CD4-positive, alpha-beta memory T cell (primary cell): ENCODE measurements at regions of chr14 and their contacts with region 1.

Region 1: DNA sequence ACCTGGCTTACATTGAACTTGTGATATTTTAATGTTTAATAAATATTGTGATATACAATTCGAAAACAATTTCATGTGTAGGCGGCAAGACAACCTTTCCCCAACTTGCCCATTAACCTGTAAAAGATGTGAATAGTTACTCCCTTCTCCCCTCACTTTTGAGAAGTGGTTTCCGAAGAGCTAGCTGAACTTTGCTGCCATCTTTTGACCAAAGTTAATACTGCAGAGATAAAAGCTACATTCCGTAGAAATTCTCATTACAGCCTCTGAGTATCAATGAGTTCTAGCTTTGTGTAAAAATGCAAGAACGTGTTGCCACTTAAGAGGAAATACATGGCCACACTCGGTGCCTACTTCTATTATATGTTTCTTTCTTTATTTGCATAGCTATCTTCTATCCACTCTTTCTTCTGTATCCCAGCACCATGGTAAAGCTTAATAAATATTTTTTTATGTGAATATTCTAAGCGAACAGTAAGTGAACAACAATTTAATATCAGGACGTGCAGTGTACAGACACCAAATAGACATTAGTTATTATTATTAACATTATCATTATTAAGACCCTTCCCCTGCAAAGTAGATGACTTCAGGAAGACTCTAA is 105.1 kb upstream of the TMEM260 start:
- DNase-seq: peak in 4 of 5 donors; percentile 30 to 44 (median 38)
- H3K4me3 ChIP-seq: no peak overlapping the region
- H3K4me3 Mint-ChIP-seq: no peak overlapping the region
- H3K27ac ChIP-seq: no peak overlapping the region
- H3K27ac Mint-ChIP-seq: no peak overlapping the region
- H3K4me1 ChIP-seq: no peaks in the 10 kb centered on the region
- H3K4me1 Mint-ChIP-seq: no peaks in the 10 kb centered on the region
- H3K27me3 ChIP-seq: no peaks in the 10 kb centered on the region
- H3K27me3 Mint-ChIP-seq: peaks cover 5 to 7% of the 10 kb centered on the region in 2 donors

Region 2: GRCh38 chr14:55212634-55213033 is 1261.9 kb before region 1 on chr14:
- CTCF ChIA-PET with region 1: no interaction called
- POLR2A ChIA-PET with region 1: no interaction called
- intact Hi-C with region 1: loop called (anchors 1 kb)
- DNase-seq: no peak
- H3K4me3 ChIP-seq: no peak overlapping the region
- H3K4me3 Mint-ChIP-seq: no peak overlapping the region
- H3K27ac ChIP-seq: no peak overlapping the region
- H3K27ac Mint-ChIP-seq: no peak overlapping the region
- H3K4me1 ChIP-seq: no peaks in the 10 kb centered on the region
- H3K4me1 Mint-ChIP-seq: peaks cover 0 to 5% (median 2%) of the 10 kb centered on the region in 4 donors
- H3K27me3 ChIP-seq: no peaks in the 10 kb centered on the region
- H3K27me3 Mint-ChIP-seq: peaks cover 0 to 1% of the 10 kb centered on the region in 2 donors

Region 3: GRCh38 chr14:55707365-55707804 is 767.1 kb before region 1 on chr14:
- CTCF ChIA-PET with region 1: interaction called, 15 read pairs
- POLR2A ChIA-PET with region 1: no interaction called
- intact Hi-C with region 1: loop called (anchors 10 kb)
- DNase-seq: peak in 3 of 5 donors; percentile 22 to 31 (median 26)
- H3K4me3 ChIP-seq: no peak overlapping the region
- H3K4me3 Mint-ChIP-seq: no peak overlapping the region
- H3K27ac ChIP-seq: no peak overlapping the region
- H3K27ac Mint-ChIP-seq: no peak overlapping the region
- H3K4me1 ChIP-seq: no peaks in the 10 kb centered on the region
- H3K4me1 Mint-ChIP-seq: no peaks in the 10 kb centered on the region
- H3K27me3 ChIP-seq: no peaks in the 10 kb centered on the region
- H3K27me3 Mint-ChIP-seq: no peaks in the 10 kb centered on the region

Region 4: GRCh38 chr14:55864890-55865655 is 609.4 kb before region 1 on chr14:
- CTCF ChIA-PET with region 1: no interaction called
- POLR2A ChIA-PET with region 1: no interaction called
- intact Hi-C with region 1: loop called (anchors 10 kb)
- DNase-seq: no peak
- H3K4me3 ChIP-seq: no peak overlapping the region
- H3K4me3 Mint-ChIP-seq: peak overlapping the region in 1 of 8 donors; percentile 43
- H3K27ac ChIP-seq: no peak overlapping the region
- H3K27ac Mint-ChIP-seq: peak overlapping the region in 1 of 7 donors; percentile 71
- H3K4me1 ChIP-seq: no peaks in the 10 kb centered on the region
- H3K4me1 Mint-ChIP-seq: no peaks in the 10 kb centered on the region
- H3K27me3 ChIP-seq: no peaks in the 10 kb centered on the region
- H3K27me3 Mint-ChIP-seq: peaks cover 6% of the 10 kb centered on the region in 2 donors

Region 5: GRCh38 chr14:56491299-56492285 is 17.1 kb after region 1 on chr14:
- CTCF ChIA-PET with region 1: interaction called, 47 read pairs
- POLR2A ChIA-PET with region 1: no interaction called
- intact Hi-C with region 1: no loop called
- DNase-seq: peak in 4 of 5 donors; percentile 9 to 29 (median 12)
- H3K4me3 ChIP-seq: no peak overlapping the region
- H3K4me3 Mint-ChIP-seq: peak overlapping the region in 5 of 8 donors; percentile 29 to 58 (median 33)
- H3K27ac ChIP-seq: no peak overlapping the region
- H3K27ac Mint-ChIP-seq: no peak overlapping the region
- H3K4me1 ChIP-seq: peaks cover 6% of the 10 kb centered on the region
- H3K4me1 Mint-ChIP-seq: peaks cover 4 to 6% (median 5%) of the 10 kb centered on the region in 4 donors
- H3K27me3 ChIP-seq: no peaks in the 10 kb centered on the region
- H3K27me3 Mint-ChIP-seq: peaks cover 0 to 1% of the 10 kb centered on the region in 2 donors